Left colon (tissue), 2 donors: ENCODE measurements at regions of chr4 and their contacts with region 1.

Region 1: GRCh38 chr4:7802093-7802726 is 137.5 kb downstream of the AFAP1 start:
- DNase-seq: peak; percentile 60 to 84
- ATAC-seq: peak; percentile 80

Region 2: DNA sequence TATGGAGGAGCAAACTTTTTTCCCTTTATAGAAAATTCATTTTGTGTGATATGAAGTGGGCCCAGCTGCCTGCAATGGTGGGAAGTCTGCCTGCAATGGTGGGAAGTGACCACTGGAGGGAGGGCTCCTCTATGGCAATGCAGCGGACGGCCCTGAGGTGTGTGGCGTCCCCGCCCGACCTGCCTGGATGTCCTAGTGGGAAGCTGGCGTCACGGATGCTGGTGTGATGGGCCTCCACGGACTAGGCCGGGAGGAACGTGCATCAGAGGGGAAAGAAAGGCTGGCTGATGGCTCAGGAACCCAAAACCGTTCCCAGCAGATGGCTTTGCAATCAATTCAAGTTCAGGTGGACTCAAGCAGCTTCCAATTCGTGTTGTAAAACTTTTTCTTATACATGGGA is 40.5 kb before region 1 on chr4:
- intact Hi-C with region 1: loop called in 1 of 2 experiments (anchors 5 kb)
- DNase-seq: peak; percentile 72 to 79
- ATAC-seq: peak; percentile 78

Region 3: DNA sequence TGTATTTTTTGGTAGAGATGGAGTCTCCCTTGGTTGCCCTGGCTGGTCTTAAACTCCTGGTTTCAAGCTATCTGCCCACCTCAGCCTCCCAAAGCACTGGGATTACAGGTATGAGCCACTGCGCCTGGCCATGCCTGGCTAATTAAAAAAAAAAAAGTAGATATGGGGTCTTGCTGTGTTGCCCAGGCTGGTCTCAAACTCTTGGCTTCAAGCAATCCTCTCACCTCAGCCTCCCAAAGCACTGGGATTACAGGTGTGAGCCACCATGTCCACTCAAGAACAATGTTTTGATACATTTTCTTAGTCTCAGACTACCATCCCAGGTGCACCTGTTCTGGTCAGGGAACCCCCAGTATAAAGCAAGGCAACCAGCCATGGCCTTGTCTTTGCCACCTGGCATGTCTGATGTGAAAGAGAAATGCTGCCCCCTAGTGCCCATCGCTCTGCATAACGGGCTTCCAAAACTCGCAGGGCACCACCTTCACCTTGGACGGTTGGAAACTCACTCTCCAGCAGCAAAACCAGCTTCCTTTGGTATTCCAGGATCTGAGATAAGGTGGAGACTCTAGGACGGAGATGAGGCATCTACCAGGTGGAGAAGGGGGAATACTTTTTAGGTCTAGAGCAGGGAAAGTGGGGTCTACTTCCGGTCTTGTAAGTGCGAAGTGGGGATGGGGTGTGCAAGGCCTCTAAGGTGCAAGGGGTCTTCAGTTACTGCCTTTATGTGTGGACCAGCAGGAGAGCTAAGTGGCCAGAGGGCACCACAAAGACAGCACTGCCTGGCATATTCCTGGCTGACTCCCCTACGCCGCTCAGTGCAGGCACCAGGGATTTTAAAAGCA is 185.2 kb after region 1 on chr4:
- intact Hi-C with region 1: loop called (anchors 5 to 10 kb)
- DNase-seq: peak; percentile 66 to 86
- ATAC-seq: peak; percentile 53